ENCODE measurements at regions of chr12 and their contacts with region 1.

Region 1: GRCh38 chr12:71551529-71551928 is 111.9 kb downstream of the LGR5 start:
- DNase-seq: no peak
- H3K4me3 ChIP-seq: peak overlapping the region in 1 of 59 donors; percentile 2
- H3K27ac ChIP-seq: peak overlapping the region in 10 of 59 donors; percentile 18 to 67 (median 41)
- H3K27me3 ChIP-seq: no peaks in the 10 kb centered on the region
- CTCF ChIP-seq: peak in 55 of 56 donors; percentile 42 to 82 (median 60)

Region 2: GRCh38 chr12:71216725-71217579 is 334.6 kb before region 1 on chr12:
- intact Hi-C with region 1: loop called in 1 of 2 experiments (anchors 5 kb)
- DNase-seq: peak in 4 of 10 donors; percentile 5 to 62 (median 52)
- H3K4me3 ChIP-seq: no peak overlapping the region
- H3K27ac ChIP-seq: no peak overlapping the region
- H3K27me3 ChIP-seq: no peaks in the 10 kb centered on the region
- CTCF ChIP-seq: peak; percentile 28 to 77 (median 60)

Region 3: GRCh38 chr12:71415336-71416231 is 135.9 kb before region 1 on chr12:
- intact Hi-C with region 1: loop called (anchors 1 to 5 kb)
- DNase-seq: peak in 1 of 10 donors; percentile 17
- H3K4me3 ChIP-seq: no peak overlapping the region
- H3K27ac ChIP-seq: no peak overlapping the region
- H3K27me3 ChIP-seq: peaks cover 0 to 3% (median 0%) of the 10 kb centered on the region in 45 donors
- CTCF ChIP-seq: peak; percentile 60 to 98 (median 85)

Region 4: DNA sequence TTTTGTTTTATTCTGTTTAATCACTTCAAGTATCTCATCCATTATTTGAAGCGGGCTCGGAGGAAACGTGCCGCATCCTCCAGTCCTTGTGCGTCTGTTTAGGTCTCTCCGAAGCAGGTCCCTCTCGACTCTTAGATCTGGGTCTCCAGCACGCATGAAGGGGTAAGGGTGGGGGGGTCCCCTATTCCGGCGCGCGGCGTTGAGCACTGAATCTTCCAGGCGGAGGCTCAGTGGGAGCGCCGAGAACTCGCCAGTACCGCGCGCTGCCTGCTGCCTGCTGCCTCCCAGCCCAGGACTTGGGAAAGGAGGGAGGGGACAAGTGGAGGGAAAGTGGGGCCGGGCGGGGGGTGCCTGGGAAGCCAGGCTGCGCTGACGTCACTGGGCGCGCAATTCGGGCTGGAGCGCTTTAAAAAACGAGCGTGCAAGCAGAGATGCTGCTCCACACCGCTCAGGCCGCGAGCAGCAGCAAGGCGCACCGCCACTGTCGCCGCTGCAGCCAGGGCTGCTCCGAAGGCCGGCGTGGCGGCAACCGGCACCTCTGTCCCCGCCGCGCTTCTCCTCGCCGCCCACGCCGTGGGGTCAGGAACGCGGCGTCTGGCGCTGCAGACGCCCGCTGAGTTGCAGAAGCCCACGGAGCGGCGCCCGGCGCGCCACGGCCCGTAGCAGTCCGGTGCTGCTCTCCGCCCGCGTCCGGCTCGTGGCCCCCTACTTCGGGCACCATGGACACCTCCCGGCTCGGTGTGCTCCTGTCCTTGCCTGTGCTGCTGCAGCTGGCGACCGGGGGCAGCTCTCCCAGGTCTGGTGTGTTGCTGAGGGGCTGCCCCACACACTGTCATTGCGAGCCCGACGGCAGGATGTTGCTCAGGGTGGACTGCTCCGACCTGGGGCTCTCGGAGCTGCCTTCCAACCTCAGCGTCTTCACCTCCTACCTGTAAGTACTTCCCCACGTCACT is 111.9 kb before region 1 on chr12 and contains the start of gene LGR5:
- intact Hi-C with region 1: loop called in 1 of 2 experiments (anchors 5 kb)
- DNase-seq: peak; percentile 27 to 95 (median 90)
- H3K4me3 ChIP-seq: peak within 1 kb of the TSS; percentile 47 to 84 (median 69)
- H3K27ac ChIP-seq: peak within 1 kb of the TSS in 53 of 59 donors; percentile 4 to 89 (median 61)
- H3K27me3 ChIP-seq: peaks cover 0 to 51% (median 9%) of the 10 kb centered on the region in 45 donors
- CTCF ChIP-seq: peak in 19 of 56 donors; percentile 7 to 50 (median 15)
- total RNA-seq, gene LGR5: 1.1 to 33.8 (median 7.3) TPM

Region 5: DNA sequence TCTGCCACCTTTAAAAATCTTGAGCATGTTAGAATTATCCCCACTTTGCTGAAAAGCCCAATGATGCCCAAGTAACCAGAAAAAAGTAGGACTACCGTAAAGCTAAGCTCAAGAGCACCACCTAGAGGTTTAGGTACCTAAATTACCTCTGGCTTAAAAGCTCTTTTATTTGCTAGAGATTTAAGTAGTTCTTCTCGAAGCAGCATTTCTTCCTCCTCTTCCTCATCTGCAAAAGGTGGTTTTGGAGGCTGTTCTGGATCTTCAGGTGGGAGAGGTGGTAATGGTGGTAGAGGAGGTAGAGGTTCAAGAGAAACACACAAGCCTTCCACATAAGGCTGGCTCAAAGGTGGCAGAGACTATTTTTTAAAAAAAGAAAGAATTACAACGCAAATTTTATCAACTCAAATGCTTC is 85.2 kb after region 1 on chr12:
- intact Hi-C with region 1: loop called in 1 of 2 experiments (anchors 10 kb)
- DNase-seq: no peak
- H3K4me3 ChIP-seq: no peak overlapping the region
- H3K27ac ChIP-seq: peak overlapping the region in 7 of 59 donors; percentile 7 to 47 (median 18)
- H3K27me3 ChIP-seq: no peaks in the 10 kb centered on the region
- CTCF ChIP-seq: peak; percentile 48 to 91 (median 76)

Measured in dorsolateral prefrontal cortex (tissue), 120 donors.